ENCODE measurements at regions of chr10 and their contacts with region 1.

Region 1: GRCh38 chr10:131972474-131973071 is 9.2 kb downstream of the BNIP3 start:
- DNase-seq: peak; percentile 72
- ATAC-seq: peak; percentile 76 to 83

Region 2: GRCh38 chr10:131900350-131901146 is 72.0 kb before region 1 on chr10 and contains the start of gene PPP2R2D:
- intact Hi-C with region 1: loop called in 1 of 2 experiments (anchors 5 kb)
- DNase-seq: peak; percentile 94
- ATAC-seq: peak; percentile 95 to 98
- total RNA-seq, gene PPP2R2D: 30.0 to 38.4 TPM

Measured in left cardiac atrium (tissue), 4 donors.